ENCODE measurements at regions of chrX and their contacts with region 1.

Region 1: DNA sequence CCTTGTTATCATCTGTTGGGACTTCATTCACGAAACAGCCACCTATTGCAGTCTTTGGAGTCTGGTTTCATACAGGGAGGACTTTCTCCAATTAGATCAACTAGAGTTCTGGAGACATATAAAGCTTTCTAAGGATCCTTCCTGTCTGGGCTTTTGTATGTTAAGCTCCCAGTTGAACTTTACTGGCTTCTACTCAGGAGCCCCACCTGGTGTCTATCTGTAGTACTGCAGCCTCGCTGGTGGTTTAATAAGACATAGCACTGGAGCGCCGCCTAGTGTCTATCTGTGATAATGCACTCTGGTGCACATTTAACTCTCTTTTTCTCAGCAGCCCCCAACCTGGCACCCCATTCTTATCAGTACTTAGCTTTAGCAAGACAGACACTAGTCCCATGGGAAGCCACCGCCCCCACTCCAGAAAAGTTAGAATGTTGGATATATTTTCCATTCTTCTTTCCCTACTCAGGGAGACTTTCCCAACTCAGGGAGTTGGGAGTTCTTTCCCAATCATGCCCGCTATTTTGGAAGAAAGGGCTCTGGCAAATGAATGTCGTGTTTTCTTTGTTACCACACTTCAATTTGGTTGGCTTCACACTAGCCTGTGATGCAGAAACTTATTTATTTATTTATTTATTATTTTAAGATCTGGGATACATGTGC is 36.9 kb upstream of the SYTL4 start:
- DNase-seq: peak; percentile 75
- H3K4me3 ChIP-seq: no peak overlapping the region
- H3K27ac ChIP-seq: no peak overlapping the region
- H3K4me1 ChIP-seq: no peaks in the 10 kb centered on the region
- H3K27me3 ChIP-seq: peaks cover 0 to 6% of the 10 kb centered on the region in 2 experiments
- CTCF ChIP-seq: peak; percentile 84 to 85
- POLR2A ChIP-seq: no peak

Region 2: GRCh38 chrX:100615005-100615404 is 153.8 kb before region 1 on chrX:
- CTCF ChIA-PET with region 1: interaction called, 33 read pairs
- POLR2A ChIA-PET with region 1: no interaction called
- dilution Hi-C with region 1: no loop called
- intact Hi-C with region 1: loop called (anchors 1 kb)
- DNase-seq: peak; percentile 74
- H3K4me3 ChIP-seq: no peak overlapping the region
- H3K27ac ChIP-seq: no peak overlapping the region
- H3K4me1 ChIP-seq: peaks cover 2% of the 10 kb centered on the region
- H3K27me3 ChIP-seq: no peaks in the 10 kb centered on the region
- CTCF ChIP-seq: peak; percentile 46 to 60
- POLR2A ChIP-seq: no peak

Region 3: GRCh38 chrX:100674705-100675104 is 94.1 kb before region 1 on chrX:
- CTCF ChIA-PET with region 1: interaction called, 136 read pairs
- POLR2A ChIA-PET with region 1: interaction called, 5 read pairs
- dilution Hi-C with region 1: no loop called
- intact Hi-C with region 1: loop called (anchors 1 kb)
- DNase-seq: no peak
- H3K4me3 ChIP-seq: no peak overlapping the region
- H3K27ac ChIP-seq: peak overlapping the region; percentile 29
- H3K4me1 ChIP-seq: peaks cover 39% of the 10 kb centered on the region
- H3K27me3 ChIP-seq: no peaks in the 10 kb centered on the region
- CTCF ChIP-seq: no peak
- POLR2A ChIP-seq: no peak

Region 4: DNA sequence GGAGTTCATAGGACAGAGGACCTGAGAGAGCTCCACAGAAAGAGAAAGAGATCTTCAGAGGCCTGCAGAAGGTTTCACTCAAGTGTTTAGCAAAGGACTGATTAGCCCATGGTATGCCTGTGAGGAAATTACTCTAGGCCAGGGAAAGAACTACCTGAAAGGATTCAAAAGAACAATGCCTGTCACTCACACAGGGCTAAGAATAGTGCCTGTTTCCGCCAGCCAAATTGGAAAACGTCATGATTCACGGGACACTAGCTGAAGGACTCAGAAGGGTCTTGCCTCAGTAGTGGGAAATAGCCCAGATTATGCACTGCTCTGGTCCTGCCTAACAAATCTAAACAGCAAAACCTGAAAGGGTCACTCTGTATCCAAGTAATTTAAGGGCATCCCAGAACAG is 58.0 kb before region 1 on chrX:
- CTCF ChIA-PET with region 1: interaction called, 19 read pairs
- POLR2A ChIA-PET with region 1: no interaction called
- dilution Hi-C with region 1: no loop called
- intact Hi-C with region 1: no loop called
- DNase-seq: peak; percentile 18
- H3K4me3 ChIP-seq: no peak overlapping the region
- H3K27ac ChIP-seq: no peak overlapping the region
- H3K4me1 ChIP-seq: no peaks in the 10 kb centered on the region
- H3K27me3 ChIP-seq: no peaks in the 10 kb centered on the region
- CTCF ChIP-seq: no peak
- POLR2A ChIP-seq: no peak

Region 5: GRCh38 chrX:100731441-100732281 is 37.1 kb before region 1 on chrX and contains the start of gene SYTL4:
- CTCF ChIA-PET with region 1: interaction called, 57 read pairs
- POLR2A ChIA-PET with region 1: no interaction called
- dilution Hi-C with region 1: no loop called
- intact Hi-C with region 1: loop called (anchors 1 kb)
- DNase-seq: peak; percentile 57
- H3K4me3 ChIP-seq: peak within 1 kb of the TSS; percentile 71 to 74 (median 71)
- H3K27ac ChIP-seq: peak within 1 kb of the TSS; percentile 35
- H3K4me1 ChIP-seq: peaks cover 16% of the 10 kb centered on the region
- H3K27me3 ChIP-seq: no peaks in the 10 kb centered on the region
- CTCF ChIP-seq: no peak
- POLR2A ChIP-seq: no peak
- total RNA-seq, gene SYTL4: 18.4 and 25.6 TPM in 2 replicates